Heart left ventricle (tissue), 16 donors: ENCODE measurements at regions of chr17 and their contacts with region 1.

Region 1: GRCh38 chr17:8057691-8058114 is 18.8 kb downstream of the ALOX15B start:
- DNase-seq: peak in 1 of 5 donors; percentile 37
- ATAC-seq: peak; percentile 68 to 86 (median 82)
- H3K4me3 ChIP-seq: no peak overlapping the region
- H3K27ac ChIP-seq: no peak overlapping the region
- H3K4me1 ChIP-seq: peaks cover 0 to 32% (median 1%) of the 10 kb centered on the region in 12 donors
- H3K27me3 ChIP-seq: peaks cover 9 to 47% (median 33%) of the 10 kb centered on the region in 9 donors
- CTCF ChIP-seq: peak; percentile 66 to 88 (median 72)
- POLR2A ChIP-seq: no peak

Region 2: GRCh38 chr17:7740481-7741001 is 317.2 kb before region 1 on chr17:
- intact Hi-C with region 1: loop called in 3 of 10 experiments (anchors 5 to 10 kb)
- DNase-seq: no peak
- ATAC-seq: peak in 1 of 4 donors; percentile 30
- H3K4me3 ChIP-seq: peak overlapping the region in 8 of 12 donors; percentile 12 to 35 (median 24)
- H3K27ac ChIP-seq: no peak overlapping the region
- H3K4me1 ChIP-seq: peaks cover 0 to 13% (median 0%) of the 10 kb centered on the region in 12 donors
- H3K27me3 ChIP-seq: peaks cover 0 to 13% (median 4%) of the 10 kb centered on the region in 9 donors
- CTCF ChIP-seq: no peak
- POLR2A ChIP-seq: no peak

Region 3: GRCh38 chr17:7825206-7825990 is 232.3 kb before region 1 on chr17:
- intact Hi-C with region 1: loop called in 3 of 10 experiments (anchors 5 kb)
- DNase-seq: no peak
- ATAC-seq: no peak
- H3K4me3 ChIP-seq: no peak overlapping the region
- H3K27ac ChIP-seq: no peak overlapping the region
- H3K4me1 ChIP-seq: no peaks in the 10 kb centered on the region
- H3K27me3 ChIP-seq: no peaks in the 10 kb centered on the region
- CTCF ChIP-seq: peak in 1 of 12 donors; percentile 15
- POLR2A ChIP-seq: no peak

Region 4: DNA sequence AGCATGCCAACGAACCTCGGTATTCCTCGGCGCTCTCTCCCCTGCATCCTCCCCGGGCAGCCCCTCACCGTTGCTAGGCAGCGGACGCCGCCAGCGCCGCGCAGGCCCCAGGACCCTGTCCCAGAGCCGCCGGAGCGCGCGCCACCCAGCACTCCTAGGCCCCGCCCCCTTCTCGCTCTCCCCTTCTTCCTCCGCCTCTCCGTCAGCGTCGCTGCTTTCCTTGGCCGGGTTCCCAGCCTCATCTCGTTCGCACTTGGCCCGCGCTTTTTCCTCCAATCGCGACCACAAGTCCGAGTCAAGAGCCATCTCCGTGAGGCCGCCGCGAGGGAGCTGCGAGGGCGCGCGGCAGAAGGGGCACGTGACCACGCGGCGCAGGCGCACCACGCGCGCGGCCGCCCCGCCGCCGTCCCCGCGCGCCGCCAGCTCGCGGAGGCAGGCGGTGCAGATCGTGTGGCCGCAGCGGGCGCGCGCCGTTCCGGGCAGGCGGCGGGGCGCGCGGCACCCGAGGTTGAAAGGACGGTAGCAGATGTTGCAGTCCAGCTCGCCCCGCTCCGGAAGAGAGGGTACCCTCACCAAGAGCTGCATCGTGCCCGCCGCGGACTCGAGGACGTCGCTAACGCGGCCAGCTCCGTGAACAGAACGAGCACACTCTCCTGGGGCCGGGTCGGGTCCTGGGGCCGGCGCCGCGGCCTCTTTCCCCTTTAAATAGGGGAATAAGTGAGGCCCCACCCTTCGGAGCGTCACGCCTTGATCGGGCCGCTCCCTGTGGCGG is 141.9 kb before region 1 on chr17 and contains the start of gene RNF227:
- intact Hi-C with region 1: loop called in 4 of 10 experiments (anchors 5 to 10 kb)
- DNase-seq: peak; percentile 92 to 94 (median 92)
- ATAC-seq: peak; percentile 84 to 92 (median 90)
- H3K4me3 ChIP-seq: peak within 1 kb of the TSS; percentile 37 to 83 (median 63)
- H3K27ac ChIP-seq: peak within 1 kb of the TSS; percentile 85 to 98 (median 95)
- H3K4me1 ChIP-seq: peaks cover 0 to 32% (median 25%) of the 10 kb centered on the region in 12 donors
- H3K27me3 ChIP-seq: no peaks in the 10 kb centered on the region
- CTCF ChIP-seq: peak in 1 of 12 donors; percentile 13
- POLR2A ChIP-seq: peak in 1 of 2 donors; percentile 30
- total RNA-seq, gene RNF227: 0.51 to 4.9 (median 1.1) TPM

Region 5: GRCh38 chr17:8001976-8002720 is 55.6 kb before region 1 on chr17 and contains the start of gene GUCY2D:
- intact Hi-C with region 1: loop called in 1 of 10 experiments (anchors 10 kb)
- DNase-seq: no peak
- ATAC-seq: peak in 2 of 4 donors; percentile 37 to 55
- H3K4me3 ChIP-seq: peak within 1 kb of the TSS; percentile 4 to 46 (median 33)
- H3K27ac ChIP-seq: no peak within 1 kb of the TSS
- H3K4me1 ChIP-seq: peaks cover 4 to 20% (median 12%) of the 10 kb centered on the region in 12 donors
- H3K27me3 ChIP-seq: peaks cover 16 to 62% (median 30%) of the 10 kb centered on the region in 9 donors
- CTCF ChIP-seq: no peak
- POLR2A ChIP-seq: no peak
- total RNA-seq, gene GUCY2D: not detected

Region 6: GRCh38 chr17:8073627-8074484 is 16.2 kb after region 1 on chr17:
- intact Hi-C with region 1: loop called in 1 of 10 experiments (anchors 2 kb)
- DNase-seq: peak; percentile 57 to 87 (median 66)
- ATAC-seq: peak in 3 of 4 donors; percentile 55 to 79 (median 78)
- H3K4me3 ChIP-seq: peak overlapping the region in 2 of 12 donors; percentile 6 to 34
- H3K27ac ChIP-seq: no peak overlapping the region
- H3K4me1 ChIP-seq: peaks cover 0 to 31% (median 16%) of the 10 kb centered on the region in 12 donors
- H3K27me3 ChIP-seq: peaks cover 28 to 84% (median 72%) of the 10 kb centered on the region in 9 donors
- CTCF ChIP-seq: peak; percentile 71 to 97 (median 88)
- POLR2A ChIP-seq: no peak

Region 7: DNA sequence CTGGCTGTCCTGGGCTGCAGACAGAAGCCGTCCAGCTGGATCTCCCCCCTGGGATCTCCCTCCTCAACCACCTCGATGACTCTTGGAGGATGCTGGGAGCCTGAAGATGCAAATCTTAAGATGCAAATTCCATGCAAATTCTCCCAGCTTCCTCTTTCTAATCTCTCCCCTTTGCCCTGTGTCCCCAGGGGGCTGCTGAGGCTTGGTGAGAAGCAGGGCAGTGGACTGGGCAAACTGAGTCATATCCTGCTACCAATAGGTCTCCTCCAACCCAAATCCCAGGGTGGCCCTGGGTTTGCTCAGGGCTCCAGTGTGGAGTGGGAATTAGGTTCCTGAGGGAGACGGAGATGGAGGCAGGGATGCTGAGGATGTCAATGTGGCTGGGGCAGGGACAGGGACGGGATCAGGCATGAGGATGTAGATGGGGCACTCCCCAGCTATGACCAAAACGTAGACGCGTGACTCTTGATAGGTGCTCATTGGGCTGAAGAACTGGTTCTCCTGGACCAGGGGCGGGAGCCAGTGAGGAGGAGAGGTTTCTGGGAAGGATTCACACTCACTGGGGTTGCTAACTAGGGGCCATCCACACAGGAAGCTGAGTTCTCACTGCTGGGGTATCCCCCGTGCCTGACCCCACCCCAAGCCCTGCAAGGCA is 33.5 kb after region 1 on chr17:
- intact Hi-C with region 1: no loop called
- DNase-seq: peak in 1 of 5 donors; percentile 14
- ATAC-seq: no peak
- H3K4me3 ChIP-seq: no peak overlapping the region
- H3K27ac ChIP-seq: no peak overlapping the region
- H3K4me1 ChIP-seq: no peaks in the 10 kb centered on the region
- H3K27me3 ChIP-seq: peaks cover 0 to 52% (median 14%) of the 10 kb centered on the region in 9 donors
- CTCF ChIP-seq: no peak
- POLR2A ChIP-seq: no peak

Region 8: GRCh38 chr17:8294814-8295316 is 237.2 kb after region 1 on chr17:
- intact Hi-C with region 1: loop called in 2 of 10 experiments (anchors 5 to 10 kb)
- DNase-seq: no peak
- ATAC-seq: peak; percentile 2 to 14 (median 9)
- H3K4me3 ChIP-seq: peak overlapping the region in 11 of 12 donors; percentile 54 to 85 (median 71)
- H3K27ac ChIP-seq: peak overlapping the region; percentile 79 to 99 (median 94)
- H3K4me1 ChIP-seq: peaks cover 0 to 22% (median 10%) of the 10 kb centered on the region in 12 donors
- H3K27me3 ChIP-seq: no peaks in the 10 kb centered on the region
- CTCF ChIP-seq: no peak
- POLR2A ChIP-seq: no peak